HCT116 (cell line): ENCODE measurements at regions of chr5 and their contacts with region 1.

Region 1: GRCh38 chr5:135551593-135552447 is 16.1 kb upstream of the NEUROG1 start:
- DNase-seq: peak; percentile 69
- ATAC-seq: peak; percentile 85
- H3K4me3 ChIP-seq: no peak overlapping the region
- H3K27ac ChIP-seq: no peak overlapping the region
- H3K4me1 ChIP-seq: peaks cover 8% of the 10 kb centered on the region in 2 experiments
- H3K27me3 ChIP-seq: peaks cover 11% of the 10 kb centered on the region; the same call in 1 of the 2 replicates
- CTCF ChIP-seq: peak; percentile 85 to 92 (median 92)
- POLR2A ChIP-seq: no peak
- RAD21 ChIP-seq: peak; percentile 94

Region 2: GRCh38 chr5:134989266-134989830 is 562.5 kb before region 1 on chr5:
- CTCF ChIA-PET with region 1: no interaction called
- POLR2A ChIA-PET with region 1: no interaction called
- RAD21 ChIA-PET with region 1: no interaction called
- intact Hi-C with region 1: no loop called
- DNase-seq: no peak
- ATAC-seq: no peak
- H3K4me3 ChIP-seq: no peak overlapping the region
- H3K27ac ChIP-seq: no peak overlapping the region
- H3K4me1 ChIP-seq: no peaks in the 10 kb centered on the region
- H3K27me3 ChIP-seq: no peaks in the 10 kb centered on the region
- CTCF ChIP-seq: no peak
- POLR2A ChIP-seq: no peak
- RAD21 ChIP-seq: no peak

Region 3: GRCh38 chr5:135526924-135527323 is 24.9 kb before region 1 on chr5:
- CTCF ChIA-PET with region 1: no interaction called
- POLR2A ChIA-PET with region 1: no interaction called
- RAD21 ChIA-PET with region 1: no interaction called
- intact Hi-C with region 1: no loop called
- DNase-seq: no peak
- ATAC-seq: no peak
- H3K4me3 ChIP-seq: no peak overlapping the region
- H3K27ac ChIP-seq: no peak overlapping the region
- H3K4me1 ChIP-seq: no peaks in the 10 kb centered on the region
- H3K27me3 ChIP-seq: no peaks in the 10 kb centered on the region
- CTCF ChIP-seq: no peak
- POLR2A ChIP-seq: no peak
- RAD21 ChIP-seq: no peak

Region 4: GRCh38 chr5:135565725-135566421 is 14.1 kb after region 1 on chr5:
- CTCF ChIA-PET with region 1: interaction called, 191 read pairs
- POLR2A ChIA-PET with region 1: interaction called, 5 read pairs
- RAD21 ChIA-PET with region 1: interaction called, 5 to 8 read pairs
- intact Hi-C with region 1: loop called (anchors 2 kb)
- DNase-seq: peak; percentile 50
- ATAC-seq: peak; percentile 77
- H3K4me3 ChIP-seq: no peak overlapping the region
- H3K27ac ChIP-seq: no peak overlapping the region
- H3K4me1 ChIP-seq: peaks cover 0 to 13% of the 10 kb centered on the region in 2 experiments; a peak in 1 of 4 replicates
- H3K27me3 ChIP-seq: no peaks in the 10 kb centered on the region
- CTCF ChIP-seq: peak; percentile 84 to 98 (median 97); a peak in 5 of 6 replicates
- POLR2A ChIP-seq: no peak
- RAD21 ChIP-seq: peak; percentile 71

Region 5: GRCh38 chr5:135729321-135729786 is 177.5 kb after region 1 on chr5:
- CTCF ChIA-PET with region 1: interaction called, 5 read pairs
- POLR2A ChIA-PET with region 1: no interaction called
- RAD21 ChIA-PET with region 1: no interaction called
- intact Hi-C with region 1: loop called (anchors 2 kb)
- DNase-seq: no peak
- ATAC-seq: peak; percentile 63
- H3K4me3 ChIP-seq: no peak overlapping the region
- H3K27ac ChIP-seq: no peak overlapping the region
- H3K4me1 ChIP-seq: no peaks in the 10 kb centered on the region
- H3K27me3 ChIP-seq: no peaks in the 10 kb centered on the region
- CTCF ChIP-seq: peak; percentile 35 to 46 (median 41); a peak in 4 of 6 replicates
- POLR2A ChIP-seq: no peak
- RAD21 ChIP-seq: peak; percentile 54

Region 6: DNA sequence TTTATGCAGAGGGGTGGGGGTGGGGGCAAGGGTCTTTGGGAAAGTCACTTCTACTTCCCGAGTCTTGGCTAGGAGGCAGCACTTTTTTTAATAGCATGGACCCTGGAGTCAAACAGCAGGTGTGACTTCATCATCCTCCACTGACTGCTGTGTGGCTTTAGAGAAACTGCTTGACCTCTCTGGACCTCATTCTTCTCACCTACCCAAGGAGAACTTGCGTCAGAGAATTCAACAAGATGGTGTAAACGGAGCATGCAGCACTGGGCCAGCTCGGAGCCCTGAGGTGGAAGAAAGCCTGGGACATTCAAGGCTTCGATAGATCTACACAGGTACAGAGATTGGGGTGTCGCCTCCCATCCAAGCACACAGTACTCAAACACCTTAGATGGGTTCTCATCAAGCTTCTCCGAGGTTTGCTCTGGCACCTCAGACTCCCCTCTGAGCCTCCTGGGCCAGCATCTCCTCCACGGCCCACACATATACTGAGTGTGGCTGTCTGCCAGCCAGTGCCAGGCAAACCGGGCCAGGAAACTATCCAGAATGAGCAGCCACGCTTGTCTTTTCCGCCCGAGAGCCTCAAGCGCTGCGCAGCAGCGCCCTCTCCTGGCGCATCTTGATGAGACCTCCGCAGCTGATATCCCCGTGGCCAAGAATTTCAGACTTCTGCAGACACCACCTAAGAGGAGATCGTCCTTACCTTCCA is 278.0 kb after region 1 on chr5:
- CTCF ChIA-PET with region 1: interaction called, 28 read pairs
- POLR2A ChIA-PET with region 1: no interaction called
- RAD21 ChIA-PET with region 1: interaction called, 4 to 7 read pairs
- intact Hi-C with region 1: no loop called
- DNase-seq: peak; percentile 63
- ATAC-seq: peak; percentile 69
- H3K4me3 ChIP-seq: no peak overlapping the region
- H3K27ac ChIP-seq: no peak overlapping the region
- H3K4me1 ChIP-seq: peaks cover 0 to 13% of the 10 kb centered on the region in 2 experiments; a peak in 1 of 4 replicates
- H3K27me3 ChIP-seq: no peaks in the 10 kb centered on the region
- CTCF ChIP-seq: peak; percentile 83 to 92 (median 91)
- POLR2A ChIP-seq: no peak
- RAD21 ChIP-seq: peak; percentile 90